ENCODE measurements at regions of chr1 and their contacts with region 1.

Region 1: GRCh38 chr1:8525558-8526275 is 207.8 kb downstream of the SLC45A1 start:
- DNase-seq: peak; percentile 65
- H3K4me3 Mint-ChIP-seq: no peak overlapping the region
- H3K27ac Mint-ChIP-seq: no peak overlapping the region
- H3K4me1 Mint-ChIP-seq: peaks cover 38% of the 10 kb centered on the region
- H3K27me3 Mint-ChIP-seq: no peaks in the 10 kb centered on the region

Region 2: GRCh38 chr1:8015036-8015808 is 510.5 kb before region 1 on chr1:
- intact Hi-C with region 1: no loop called
- DNase-seq: peak; percentile 19
- H3K4me3 Mint-ChIP-seq: no peak overlapping the region
- H3K27ac Mint-ChIP-seq: no peak overlapping the region
- H3K4me1 Mint-ChIP-seq: peaks cover 3% of the 10 kb centered on the region
- H3K27me3 Mint-ChIP-seq: peaks cover 14% of the 10 kb centered on the region

Region 3: GRCh38 chr1:8343464-8344001 is 182.2 kb before region 1 on chr1:
- intact Hi-C with region 1: no loop called
- DNase-seq: no peak
- H3K4me3 Mint-ChIP-seq: no peak overlapping the region
- H3K27ac Mint-ChIP-seq: no peak overlapping the region
- H3K4me1 Mint-ChIP-seq: no peaks in the 10 kb centered on the region
- H3K27me3 Mint-ChIP-seq: no peaks in the 10 kb centered on the region

Region 4: GRCh38 chr1:8396786-8397406 is 128.8 kb before region 1 on chr1:
- intact Hi-C with region 1: loop called (anchors 1 kb)
- DNase-seq: no peak
- H3K4me3 Mint-ChIP-seq: peak overlapping the region; percentile 10
- H3K27ac Mint-ChIP-seq: peak overlapping the region; percentile 64
- H3K4me1 Mint-ChIP-seq: peaks cover 63% of the 10 kb centered on the region
- H3K27me3 Mint-ChIP-seq: no peaks in the 10 kb centered on the region

Region 5: GRCh38 chr1:8510041-8510823 is 15.5 kb before region 1 on chr1:
- intact Hi-C with region 1: loop called (anchors 1 kb)
- DNase-seq: peak; percentile 32
- H3K4me3 Mint-ChIP-seq: peak overlapping the region; percentile 48
- H3K27ac Mint-ChIP-seq: peak overlapping the region; percentile 81
- H3K4me1 Mint-ChIP-seq: peaks cover 41% of the 10 kb centered on the region
- H3K27me3 Mint-ChIP-seq: no peaks in the 10 kb centered on the region

Region 6: GRCh38 chr1:8604041-8604945 is 78.6 kb after region 1 on chr1:
- intact Hi-C with region 1: loop called (anchors 5 kb)
- DNase-seq: peak; percentile 46
- H3K4me3 Mint-ChIP-seq: peak overlapping the region; percentile 72
- H3K27ac Mint-ChIP-seq: peak overlapping the region; percentile 93
- H3K4me1 Mint-ChIP-seq: peaks cover 52% of the 10 kb centered on the region
- H3K27me3 Mint-ChIP-seq: no peaks in the 10 kb centered on the region

Region 7: GRCh38 chr1:8702850-8703810 is 177.4 kb after region 1 on chr1:
- intact Hi-C with region 1: loop called (anchors 2 kb)
- DNase-seq: peak; percentile 73
- H3K4me3 Mint-ChIP-seq: peak overlapping the region; percentile 88
- H3K27ac Mint-ChIP-seq: peak overlapping the region; percentile 87
- H3K4me1 Mint-ChIP-seq: peaks cover 46% of the 10 kb centered on the region
- H3K27me3 Mint-ChIP-seq: no peaks in the 10 kb centered on the region

Region 8: DNA sequence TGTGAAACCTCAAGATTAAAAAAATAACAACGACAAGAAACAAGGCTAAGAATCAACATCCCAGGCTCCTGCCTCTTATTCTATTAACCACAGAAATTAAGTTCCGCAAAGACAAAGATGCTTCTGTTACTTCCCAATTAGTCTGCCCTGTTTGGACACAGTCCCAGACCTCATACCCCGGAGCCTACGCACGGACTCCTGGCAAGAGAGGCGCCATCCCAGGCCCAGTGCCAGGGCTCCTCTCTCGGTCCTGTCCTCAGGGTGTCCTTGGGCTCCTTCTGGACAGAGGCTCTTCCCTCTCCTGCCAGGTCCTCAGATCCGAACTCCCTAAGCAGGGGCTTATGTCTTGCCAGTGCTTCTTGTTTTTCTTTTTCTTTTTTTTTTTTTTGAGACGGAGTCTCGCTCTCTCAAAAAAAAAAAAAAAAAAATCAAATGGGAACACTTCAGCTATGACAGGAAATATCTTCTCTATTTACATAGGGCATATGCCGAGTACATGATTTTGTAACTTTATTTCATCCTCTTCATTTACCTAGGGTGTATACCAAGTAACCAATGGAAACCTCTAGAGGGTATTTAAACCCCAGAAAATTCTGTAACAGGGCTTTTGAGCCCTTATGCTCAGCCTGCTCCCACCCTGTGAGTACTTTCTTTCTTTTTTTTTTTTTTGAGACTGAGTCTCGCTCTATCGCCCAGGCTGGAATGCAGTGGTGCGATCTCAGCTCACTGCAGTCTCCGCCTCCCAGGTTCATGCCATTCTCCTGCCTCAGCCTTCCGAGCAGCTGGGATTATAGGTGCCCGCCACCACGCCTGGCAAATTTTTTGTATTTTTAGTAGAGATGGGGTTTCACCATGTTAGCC is 364.4 kb after region 1 on chr1:
- intact Hi-C with region 1: no loop called
- DNase-seq: no peak
- H3K4me3 Mint-ChIP-seq: no peak overlapping the region
- H3K27ac Mint-ChIP-seq: no peak overlapping the region
- H3K4me1 Mint-ChIP-seq: peaks cover 8% of the 10 kb centered on the region
- H3K27me3 Mint-ChIP-seq: no peaks in the 10 kb centered on the region

Region 9: GRCh38 chr1:9181176-9181906 is 655.6 kb after region 1 on chr1:
- intact Hi-C with region 1: no loop called
- DNase-seq: peak; percentile 66
- H3K4me3 Mint-ChIP-seq: peak overlapping the region; percentile 88
- H3K27ac Mint-ChIP-seq: peak overlapping the region; percentile 80
- H3K4me1 Mint-ChIP-seq: peaks cover 17% of the 10 kb centered on the region
- H3K27me3 Mint-ChIP-seq: peaks cover 6% of the 10 kb centered on the region

Measured in activated T-helper 2 cell treated with anti-CD3 and anti-CD28 coated beads, Interferon-gamma antibody, Interleukin-2, Interleukin-4, amounts not matched to agents 10 μg/mL and 5 μg/mL and 100 μg/mL, durations not matched to agents 14 hours and 24 hours and 36 hours (primary cell).